AG04449 (cell line): ENCODE measurements at regions of chr5 and their contacts with region 1.

Region 1: GRCh38 chr5:132490486-132491367 is at the start of gene IRF1:
- DNase-seq: no peak
- H3K4me3 ChIP-seq: peak within 1 kb of the TSS; percentile 92
- CTCF ChIP-seq: peak; percentile 29

Region 2: DNA sequence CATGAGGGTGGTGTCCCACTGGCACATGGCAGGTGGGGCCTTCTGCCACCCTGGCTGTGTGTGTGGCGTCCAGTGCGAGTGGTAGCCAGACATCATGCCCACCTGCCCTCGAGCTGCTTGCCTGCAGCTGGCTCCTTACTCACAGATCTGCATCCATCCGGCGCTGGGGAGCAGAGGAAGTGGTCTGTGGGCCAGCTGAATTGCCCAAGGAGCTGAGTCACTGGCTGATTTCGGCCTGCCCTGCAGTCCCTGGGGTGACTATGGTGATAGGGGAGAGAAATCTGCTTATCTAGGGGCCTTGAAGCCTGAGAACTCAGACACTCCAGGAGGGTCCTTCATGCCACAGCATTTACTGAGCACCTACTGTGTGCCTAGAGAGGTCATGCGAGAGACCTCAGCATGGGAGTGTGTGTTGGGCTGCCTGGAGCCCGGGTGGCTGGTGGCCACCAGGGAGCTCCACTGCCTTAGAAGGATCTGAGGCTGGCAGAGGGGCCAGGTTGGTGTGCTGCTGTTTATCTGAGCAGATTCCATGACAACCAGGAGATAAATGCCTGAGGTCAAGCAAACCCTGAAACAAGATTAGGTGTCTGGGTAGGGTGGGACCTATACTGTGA is 64.1 kb before region 1 on chr5:
- CTCF ChIA-PET with region 1: interaction called, 109 read pairs
- POLR2A ChIA-PET with region 1: interaction called, 26 read pairs
- DNase-seq: peak; percentile 76
- H3K4me3 ChIP-seq: no peak overlapping the region; the same call in 1 of the 2 replicates
- CTCF ChIP-seq: peak; percentile 56

Region 3: DNA sequence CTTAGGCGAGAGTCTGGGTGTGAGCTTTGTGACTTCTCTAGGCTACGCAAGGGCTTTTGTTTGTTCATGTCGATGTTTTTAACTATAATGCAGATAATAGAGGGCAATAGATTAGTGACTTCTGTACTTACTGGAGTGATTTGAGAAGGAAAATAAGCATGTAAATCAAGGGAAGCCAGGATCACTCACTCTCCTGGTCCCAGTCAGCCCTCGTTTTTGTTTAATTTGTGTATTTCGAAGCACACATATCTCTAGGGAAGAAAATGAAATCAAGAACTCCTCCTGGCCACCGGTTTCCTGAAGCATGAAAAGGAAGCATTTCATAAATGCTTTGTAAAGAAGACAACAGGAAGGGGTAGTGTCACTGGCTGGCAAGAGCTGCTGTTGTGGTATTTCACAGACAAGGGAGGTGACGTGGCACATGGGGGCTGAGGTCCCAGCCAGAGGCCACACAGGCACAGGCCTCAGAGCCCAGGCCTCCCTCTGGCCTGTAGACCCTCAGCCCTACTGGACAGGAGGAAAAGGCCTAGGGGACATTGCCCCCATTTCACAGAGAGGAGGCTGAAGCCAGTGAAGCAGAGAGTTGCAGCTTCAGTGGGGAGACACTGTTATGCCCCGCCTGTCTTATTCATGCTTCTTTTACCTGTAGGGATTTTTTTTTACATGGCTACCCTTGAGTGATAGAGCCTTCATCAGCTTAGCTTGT is 34.3 kb before region 1 on chr5:
- CTCF ChIA-PET with region 1: interaction called, 12 read pairs
- POLR2A ChIA-PET with region 1: interaction called, 26 read pairs
- DNase-seq: no peak
- H3K4me3 ChIP-seq: no peak overlapping the region
- CTCF ChIP-seq: no peak

Region 4: DNA sequence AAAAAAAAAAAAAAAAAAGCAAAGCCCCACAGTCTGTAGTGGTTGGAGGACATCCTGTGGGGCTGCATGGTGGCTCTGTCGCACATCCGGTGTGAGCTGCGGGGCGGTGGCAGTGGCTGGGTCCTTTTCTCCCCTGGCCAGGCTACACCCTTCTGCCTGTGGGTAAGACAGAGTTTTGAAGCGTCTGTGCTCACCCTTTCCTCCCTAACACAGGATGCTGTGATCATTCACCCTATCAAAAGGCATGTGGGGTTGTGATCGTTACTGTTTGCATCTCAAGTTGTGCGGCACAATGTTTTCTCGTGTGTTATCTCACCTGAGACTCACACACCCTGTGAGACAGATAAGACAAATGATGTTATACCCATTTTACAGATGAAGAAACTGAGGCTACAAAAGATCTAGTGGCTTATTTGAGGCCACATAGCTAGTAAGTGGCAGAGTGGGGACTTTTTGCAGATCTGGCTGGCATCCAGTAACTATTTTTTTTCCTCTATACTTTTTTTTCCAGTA is 17.7 kb before region 1 on chr5:
- CTCF ChIA-PET with region 1: interaction called, 37 read pairs
- POLR2A ChIA-PET with region 1: interaction called, 34 read pairs
- DNase-seq: no peak
- H3K4me3 ChIP-seq: no peak overlapping the region
- CTCF ChIP-seq: no peak

Region 5: GRCh38 chr5:132500931-132501630 is 10.4 kb after region 1 on chr5:
- CTCF ChIA-PET with region 1: interaction called, 56 read pairs
- POLR2A ChIA-PET with region 1: interaction called, 12 read pairs
- DNase-seq: no peak
- H3K4me3 ChIP-seq: no peak overlapping the region
- CTCF ChIP-seq: peak; percentile 76

Region 6: DNA sequence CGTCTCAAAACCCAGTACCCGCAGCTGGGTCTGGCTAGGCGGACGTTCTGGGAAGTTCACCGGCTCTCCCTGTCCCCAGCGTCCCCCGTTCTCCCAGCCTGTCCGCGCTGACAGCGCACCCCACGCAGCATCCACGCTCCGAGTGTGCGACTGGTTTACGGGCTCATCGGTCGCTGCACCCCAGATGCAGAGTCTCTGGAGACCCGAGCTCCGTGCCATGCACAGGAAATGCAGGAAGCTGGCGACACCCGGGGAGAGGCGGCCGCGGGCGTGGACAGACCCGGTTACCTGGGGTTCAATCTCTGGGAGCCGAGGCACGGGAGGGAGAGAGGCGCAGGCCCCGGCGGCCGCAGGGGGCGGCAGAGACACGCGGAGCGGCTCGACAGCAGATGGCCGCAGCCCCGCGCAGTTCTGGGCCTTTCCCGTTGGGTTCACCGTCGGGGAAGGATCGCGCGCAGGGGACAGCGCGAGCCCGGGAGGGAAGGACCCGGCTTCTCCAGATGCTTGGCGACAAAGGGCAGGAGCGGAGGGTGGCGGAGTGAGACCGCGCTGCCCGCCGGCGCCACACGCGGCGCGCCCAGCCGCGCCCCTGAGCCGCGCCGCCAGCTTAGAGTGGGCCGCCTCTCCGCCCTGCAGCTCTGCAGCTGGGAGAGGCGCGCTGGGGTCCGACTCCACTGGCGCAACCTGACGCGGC is 339.2 kb after region 1 on chr5:
- CTCF ChIA-PET with region 1: no interaction called
- POLR2A ChIA-PET with region 1: no interaction called
- DNase-seq: no peak
- H3K4me3 ChIP-seq: peak overlapping the region; percentile 64
- CTCF ChIP-seq: peak; percentile 96